ENCODE measurements at regions of chr12 and their contacts with region 1.

Region 1: GRCh38 chr12:94987801-94988200 is 15.7 kb downstream of the NDUFA12 start:
- DNase-seq: no peak
- H3K4me3 Mint-ChIP-seq: peak overlapping the region; percentile 38
- H3K27ac Mint-ChIP-seq: peak overlapping the region; percentile 84
- H3K4me1 Mint-ChIP-seq: peaks cover 56% of the 10 kb centered on the region
- H3K27me3 Mint-ChIP-seq: no peaks in the 10 kb centered on the region

Region 2: DNA sequence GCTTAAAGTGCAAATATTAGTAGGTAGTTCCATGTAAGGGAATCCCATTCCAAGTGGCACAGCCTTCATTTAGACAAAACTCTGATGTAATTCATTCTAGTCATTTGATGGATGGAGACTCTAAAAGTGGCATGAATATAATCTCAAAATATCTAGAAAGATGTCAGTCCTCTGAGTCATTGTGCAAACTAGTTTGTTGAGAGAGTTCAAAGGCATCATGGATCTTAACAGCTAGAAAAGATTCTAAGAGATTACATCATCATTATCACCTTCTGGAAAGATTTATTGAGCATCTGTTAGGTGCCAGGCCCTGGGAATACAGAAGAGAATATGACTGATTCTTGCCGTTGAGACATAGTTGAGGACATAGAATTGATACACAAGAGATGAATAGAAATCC is 1280.0 kb before region 1 on chr12:
- CTCF ChIA-PET with region 1: no interaction called
- intact Hi-C with region 1: no loop called
- DNase-seq: no peak
- H3K4me3 Mint-ChIP-seq: no peak overlapping the region
- H3K27ac Mint-ChIP-seq: no peak overlapping the region
- H3K4me1 Mint-ChIP-seq: peaks cover 24% of the 10 kb centered on the region
- H3K27me3 Mint-ChIP-seq: no peaks in the 10 kb centered on the region

Region 3: DNA sequence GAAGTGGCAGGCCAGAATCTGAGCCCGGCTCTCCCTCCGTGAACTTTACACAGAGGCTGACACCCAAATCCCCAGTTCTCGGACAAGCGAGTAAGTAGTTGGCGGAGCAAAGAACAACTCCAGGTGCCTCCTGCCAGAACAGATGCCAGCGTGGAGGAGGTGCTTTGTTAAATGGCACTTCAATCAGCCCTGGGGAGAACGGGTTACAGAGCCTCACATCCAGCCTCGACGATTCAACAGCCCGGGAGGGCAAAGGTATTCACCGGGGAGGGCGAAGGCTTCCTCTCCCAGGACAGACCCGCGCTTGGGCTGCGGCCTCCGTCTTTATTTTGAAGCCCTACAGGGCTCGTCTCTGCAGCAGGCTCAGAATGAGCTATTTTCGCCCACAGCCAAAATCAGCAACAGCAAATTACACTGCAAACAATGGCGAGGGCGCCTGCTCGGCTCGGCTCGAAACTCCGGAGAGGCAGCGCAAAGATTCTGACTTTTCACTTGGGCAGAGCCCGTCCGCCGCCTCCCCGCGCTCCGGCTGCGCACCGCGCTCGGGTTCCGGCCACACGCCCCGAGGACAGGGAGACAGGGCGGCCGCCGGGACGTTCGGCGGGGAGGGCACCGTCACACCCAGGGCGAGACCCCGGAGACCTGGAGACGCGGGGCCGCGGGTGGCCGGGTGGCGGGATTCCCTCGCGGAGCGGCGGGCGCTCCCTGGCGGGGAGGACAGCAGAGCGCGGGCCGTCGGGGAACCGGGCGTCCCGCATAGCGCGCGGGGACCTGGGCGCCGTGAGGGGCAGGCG is 338.3 kb before region 1 on chr12:
- CTCF ChIA-PET with region 1: no interaction called
- intact Hi-C with region 1: no loop called
- DNase-seq: peak; percentile 14
- H3K4me3 Mint-ChIP-seq: peak overlapping the region; percentile 65
- H3K27ac Mint-ChIP-seq: no peak overlapping the region
- H3K4me1 Mint-ChIP-seq: peaks cover 8% of the 10 kb centered on the region
- H3K27me3 Mint-ChIP-seq: peaks cover 54% of the 10 kb centered on the region

Region 4: GRCh38 chr12:94941440-94941862 is 46.4 kb before region 1 on chr12:
- CTCF ChIA-PET with region 1: no interaction called
- intact Hi-C with region 1: loop called (anchors 5 kb)
- DNase-seq: peak; percentile 73
- H3K4me3 Mint-ChIP-seq: no peak overlapping the region
- H3K27ac Mint-ChIP-seq: peak overlapping the region; percentile 52
- H3K4me1 Mint-ChIP-seq: peaks cover 36% of the 10 kb centered on the region
- H3K27me3 Mint-ChIP-seq: no peaks in the 10 kb centered on the region

Region 5: DNA sequence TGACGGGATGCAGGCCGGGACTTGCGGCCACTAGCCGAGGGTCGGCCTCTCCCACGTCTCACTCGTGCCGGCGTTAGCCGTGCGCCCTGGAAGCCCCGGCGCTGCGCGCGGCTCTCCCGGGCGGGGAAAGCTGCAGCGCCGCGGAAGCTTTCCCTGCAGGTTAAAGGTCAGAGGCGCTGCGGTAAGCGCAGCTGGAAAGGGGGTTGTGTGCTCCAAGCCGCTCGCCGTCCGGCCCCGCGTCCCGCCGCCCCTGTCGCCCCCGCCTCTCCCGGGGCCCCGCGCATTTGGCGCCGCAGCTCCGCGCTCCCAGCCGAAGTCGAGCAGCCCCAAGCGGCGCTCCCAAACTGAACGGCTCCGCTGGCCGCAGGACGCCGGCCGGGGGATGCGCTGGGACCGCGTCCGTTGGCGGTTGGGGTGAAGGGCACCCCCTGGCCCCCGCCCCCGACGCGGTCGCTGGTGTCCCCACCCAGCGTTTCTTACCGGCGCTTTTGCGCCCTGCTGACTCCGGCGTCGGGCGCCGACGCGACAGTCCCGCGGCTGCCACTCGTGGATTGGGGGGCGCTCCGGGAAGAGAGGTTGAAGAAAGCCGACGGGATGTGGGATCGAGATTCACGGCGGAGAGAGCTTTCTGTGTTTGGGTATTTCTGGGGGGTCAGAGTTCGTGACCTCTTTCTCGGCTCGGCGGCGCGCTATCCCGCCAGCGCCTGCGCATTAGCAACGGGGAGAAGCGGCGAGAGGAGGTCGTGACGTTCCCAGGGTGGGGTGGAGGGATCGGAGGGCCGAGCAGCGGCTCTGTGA is 85.3 kb after region 1 on chr12 and contains the start of gene NR2C1:
- CTCF ChIA-PET with region 1: interaction called, 4 read pairs
- intact Hi-C with region 1: loop called (anchors 5 kb)
- DNase-seq: peak; percentile 95
- H3K4me3 Mint-ChIP-seq: peak within 1 kb of the TSS; percentile 92
- H3K27ac Mint-ChIP-seq: peak within 1 kb of the TSS; percentile 63
- H3K4me1 Mint-ChIP-seq: peaks cover 19% of the 10 kb centered on the region
- H3K27me3 Mint-ChIP-seq: no peaks in the 10 kb centered on the region
- total RNA-seq, gene NR2C1: 19.8 to 24.6 TPM

Measured in activated naive CD4-positive, alpha-beta T cell treated with anti-CD3 and anti-CD28 coated beads for 36 hours (primary cell).